PC-3 (cell line): ENCODE measurements at regions of chr3 and their contacts with region 1.

Region 1: DNA sequence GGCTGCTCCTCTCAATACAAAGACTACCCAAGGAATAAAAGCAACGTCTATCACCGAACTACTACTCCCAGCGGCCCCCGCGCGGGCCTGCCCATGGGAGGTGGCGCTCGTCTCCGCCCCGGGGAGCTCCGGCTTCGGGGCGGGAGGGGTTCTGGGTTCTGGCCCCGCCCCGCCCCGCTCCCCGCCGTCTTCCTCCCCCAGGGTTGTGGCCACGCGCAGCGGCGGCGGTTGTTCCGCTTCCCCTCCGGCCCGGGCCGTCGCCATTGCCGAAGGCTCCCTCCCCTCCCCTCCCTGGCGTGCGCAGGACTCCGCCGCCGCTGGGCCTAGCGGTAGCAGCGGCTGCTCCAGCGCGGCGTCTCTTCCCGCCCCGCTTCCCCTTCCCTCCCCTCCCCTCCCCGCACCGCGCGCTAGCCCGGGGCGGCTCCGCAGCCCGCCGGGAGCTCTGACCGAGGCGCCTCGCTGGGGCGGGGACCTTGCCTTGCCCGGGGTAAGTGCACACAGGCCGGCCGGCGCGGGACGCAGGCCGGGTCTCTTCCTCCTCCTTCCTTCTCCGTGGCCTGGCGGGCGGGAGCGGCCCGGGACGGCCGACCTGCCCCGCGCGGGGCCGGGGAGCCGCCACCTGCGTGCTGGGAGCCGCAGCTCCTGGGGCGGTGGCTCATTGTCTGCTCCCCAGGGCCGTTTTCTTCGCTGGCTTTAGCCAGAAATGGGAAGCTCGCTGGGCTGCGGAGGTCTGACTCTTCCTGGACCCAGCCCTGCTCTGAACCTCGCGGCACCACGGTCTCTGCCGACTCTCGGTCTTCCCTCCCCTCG is at the start of gene PAK2:
- DNase-seq: peak; percentile 91
- ATAC-seq: peak; percentile 86
- H3K4me3 ChIP-seq: peak within 1 kb of the TSS; percentile 99
- H3K27ac ChIP-seq: peak within 1 kb of the TSS; percentile 78
- H3K4me1 ChIP-seq: peaks cover 18% of the 10 kb centered on the region
- H3K27me3 ChIP-seq: no peaks in the 10 kb centered on the region
- CTCF ChIP-seq: no peak
- total RNA-seq, gene PAK2: 32.6 and 53.8 TPM in 2 replicates

Region 2: DNA sequence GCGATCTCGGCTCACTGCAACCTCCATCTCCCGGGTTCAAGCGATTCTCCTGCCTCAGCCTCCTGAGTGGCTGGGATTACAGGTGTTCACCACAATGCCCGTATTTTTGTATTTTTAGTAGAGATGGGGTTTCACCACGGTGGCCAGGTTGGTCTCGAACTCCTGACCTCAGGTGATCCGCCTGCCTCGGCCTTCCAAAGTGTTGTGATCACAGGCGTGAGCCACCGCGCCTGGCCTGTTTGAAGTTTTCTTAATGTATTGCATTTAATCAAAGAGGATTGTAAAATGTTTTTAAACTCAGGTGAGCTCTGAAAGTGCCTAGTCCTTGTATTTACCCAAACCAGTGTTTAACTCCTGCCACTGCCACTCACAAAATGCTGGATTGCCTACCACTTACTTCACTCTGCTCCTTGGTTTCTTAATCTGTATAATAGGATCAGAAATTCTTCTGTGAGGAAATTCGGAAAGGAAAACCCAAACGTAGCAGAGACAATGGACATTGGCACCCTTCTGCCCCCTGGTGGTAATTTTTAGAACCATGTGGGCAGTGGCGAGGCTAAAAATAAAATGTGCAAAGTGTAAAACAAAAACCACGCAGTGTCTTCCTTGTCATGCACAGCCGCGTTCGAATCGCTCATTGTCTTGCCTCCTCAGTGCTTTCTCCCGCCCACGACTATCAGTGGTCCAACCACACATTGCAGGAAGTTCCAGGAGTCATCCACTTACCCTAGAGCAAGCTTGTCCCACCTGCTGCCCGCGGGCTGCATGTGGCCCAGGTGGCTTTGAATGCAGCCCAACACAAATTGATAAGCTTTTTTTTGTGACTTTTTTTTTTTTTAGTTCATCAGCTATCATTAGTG is 55.1 kb before region 1 on chr3:
- CTCF ChIA-PET with region 1: interaction called, 11 read pairs
- POLR2A ChIA-PET with region 1: no interaction called
- intact Hi-C with region 1: no loop called
- DNase-seq: peak; percentile 80
- ATAC-seq: peak; percentile 88
- H3K4me3 ChIP-seq: 0 out of 2 replicates have a peak overlapping the region, but pooled peaks have one; percentile 21
- H3K27ac ChIP-seq: no peak overlapping the region
- H3K4me1 ChIP-seq: no peaks in the 10 kb centered on the region
- H3K27me3 ChIP-seq: 0 out of 2 replicates have a peak, but pooled peaks cover 3% of the 10 kb centered on the region
- CTCF ChIP-seq: peak; percentile 88

Region 3: DNA sequence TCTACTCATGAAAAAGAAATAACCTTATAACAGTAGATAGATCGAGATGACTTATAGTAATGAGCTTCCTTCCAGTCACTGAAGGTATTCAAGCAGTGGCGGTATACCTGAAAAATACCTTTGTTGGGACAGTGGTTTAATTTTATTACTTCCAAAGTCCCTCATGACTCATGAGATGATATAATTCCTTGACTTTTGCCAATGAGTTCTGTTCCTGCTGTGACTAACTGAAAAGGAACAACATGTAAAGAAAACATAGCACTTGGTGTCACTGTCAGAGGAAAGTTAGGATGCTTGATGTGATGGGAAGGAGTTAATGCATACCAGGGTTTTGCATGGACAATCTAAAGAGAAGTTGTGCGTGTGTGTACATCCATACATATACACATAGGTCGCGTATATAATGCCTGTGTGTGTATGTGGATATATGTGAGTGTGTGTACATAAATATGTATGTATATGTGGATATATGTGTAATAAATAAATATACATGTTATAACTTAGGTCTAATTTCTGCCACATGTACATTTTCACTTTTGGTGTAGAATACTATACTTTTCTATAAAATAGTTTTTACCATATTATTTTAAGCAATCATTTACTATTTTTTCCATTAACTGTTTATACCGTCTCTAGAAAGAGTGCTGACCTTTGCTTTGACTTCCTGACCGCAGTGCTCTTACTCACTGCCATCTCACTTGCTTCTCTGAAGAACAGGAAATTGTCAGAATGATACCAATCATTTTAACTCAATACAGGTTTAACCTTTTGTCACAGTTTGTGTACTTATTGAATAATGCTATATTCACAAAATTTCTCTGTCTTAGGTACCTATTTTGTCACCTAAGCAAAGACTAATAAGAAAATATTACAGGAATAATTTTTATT is 12.8 kb before region 1 on chr3:
- CTCF ChIA-PET with region 1: no interaction called
- POLR2A ChIA-PET with region 1: no interaction called
- intact Hi-C with region 1: loop called (anchors 2 kb)
- DNase-seq: peak; percentile 96
- ATAC-seq: peak; percentile 93
- H3K4me3 ChIP-seq: peak overlapping the region; percentile 13; the same call in 1 of the 2 replicates
- H3K27ac ChIP-seq: peak overlapping the region; percentile 76
- H3K4me1 ChIP-seq: peaks cover 35% of the 10 kb centered on the region
- H3K27me3 ChIP-seq: no peaks in the 10 kb centered on the region
- CTCF ChIP-seq: no peak

Region 4: DNA sequence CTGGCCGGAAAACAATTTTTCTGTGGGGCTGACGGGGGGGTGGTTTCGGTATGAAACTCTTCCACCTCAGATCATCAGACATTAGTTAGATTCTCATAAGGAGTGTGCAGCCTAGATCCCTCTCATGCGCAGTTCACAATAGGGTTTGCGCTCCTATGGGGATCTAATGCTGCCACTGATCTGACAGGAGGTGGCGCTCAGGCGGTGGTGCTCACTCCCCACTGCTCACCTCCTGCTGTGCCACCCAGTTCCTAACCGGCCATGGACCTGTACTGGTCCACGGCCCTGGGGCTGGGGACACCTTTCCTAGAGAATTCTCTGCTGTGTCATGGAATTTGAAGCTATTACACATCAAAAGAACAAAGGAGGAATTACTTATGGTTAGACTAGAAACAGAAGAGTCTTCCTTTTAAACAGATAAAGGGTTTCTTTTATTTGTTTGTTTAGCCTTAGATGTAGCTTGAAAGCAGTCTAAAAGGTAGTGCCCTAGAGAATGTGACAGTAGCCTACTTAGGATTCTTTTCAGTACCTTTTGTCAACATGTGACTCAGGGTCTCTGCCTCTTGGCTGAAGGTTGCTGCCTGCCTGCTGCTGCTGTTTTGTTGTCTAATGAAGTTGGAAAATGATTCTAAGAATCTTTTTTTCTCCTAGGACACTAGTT is 50.0 kb after region 1 on chr3:
- CTCF ChIA-PET with region 1: no interaction called
- POLR2A ChIA-PET with region 1: no interaction called
- intact Hi-C with region 1: loop called (anchors 1 kb)
- DNase-seq: peak; percentile 77
- ATAC-seq: peak; percentile 58
- H3K4me3 ChIP-seq: no peak overlapping the region
- H3K27ac ChIP-seq: peak overlapping the region; percentile 39
- H3K4me1 ChIP-seq: peaks cover 57% of the 10 kb centered on the region
- H3K27me3 ChIP-seq: no peaks in the 10 kb centered on the region
- CTCF ChIP-seq: peak; percentile 53

Region 5: DNA sequence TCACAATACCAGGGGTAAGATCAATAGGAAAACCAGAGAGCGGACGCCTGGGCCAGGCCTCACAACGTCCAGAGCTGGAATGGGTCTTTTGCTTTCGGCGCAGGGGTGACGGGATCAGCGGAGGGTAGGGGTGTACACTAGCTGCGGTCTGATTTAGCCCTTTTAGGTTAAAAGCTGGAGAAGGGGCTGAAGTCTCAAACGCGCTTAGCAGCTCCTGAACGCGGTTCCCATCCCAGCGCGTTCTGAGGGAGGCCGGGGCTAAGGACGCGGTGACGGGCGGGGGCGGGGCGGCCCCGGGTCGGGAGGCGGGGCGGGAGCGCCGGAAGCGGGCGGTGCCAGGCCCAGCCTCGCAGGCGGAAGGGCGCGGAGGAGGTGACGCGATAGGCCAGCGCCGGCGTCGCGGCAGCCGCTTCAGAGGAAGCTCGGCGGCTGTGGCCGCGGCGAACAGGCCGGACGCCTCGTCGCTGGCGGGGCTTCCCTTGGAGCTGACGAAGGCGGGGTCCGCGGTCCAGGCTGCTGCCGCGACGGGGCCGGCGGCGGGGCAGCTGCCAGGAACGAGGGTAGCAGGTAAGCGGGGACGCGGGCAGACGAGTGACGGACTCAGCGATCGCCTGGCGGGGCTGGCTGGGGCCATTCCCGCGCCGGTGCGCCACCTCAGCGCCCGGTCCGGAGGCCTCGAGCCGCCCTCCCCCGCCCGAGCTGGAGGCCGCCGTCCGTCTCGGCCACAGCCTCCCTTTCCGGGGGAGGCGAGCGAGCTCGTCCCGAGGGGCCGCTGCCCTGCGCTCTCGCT is 127.8 kb after region 1 on chr3 and contains the start of gene SENP5:
- CTCF ChIA-PET with region 1: no interaction called
- POLR2A ChIA-PET with region 1: interaction called, 15 read pairs
- intact Hi-C with region 1: no loop called
- DNase-seq: peak; percentile 91
- ATAC-seq: peak; percentile 95
- H3K4me3 ChIP-seq: peak within 1 kb of the TSS; percentile 97
- H3K27ac ChIP-seq: 0 out of 2 replicates have a peak within 1 kb of the TSS, but pooled peaks have one; percentile 24
- H3K4me1 ChIP-seq: peaks cover 10% of the 10 kb centered on the region
- H3K27me3 ChIP-seq: no peaks in the 10 kb centered on the region
- CTCF ChIP-seq: no peak
- total RNA-seq, gene SENP5: 31.4 and 34.2 TPM in 2 replicates

Region 6: GRCh38 chr3:197959898-197960693 is 1220.2 kb after region 1 on chr3 and contains the start of gene LMLN:
- CTCF ChIA-PET with region 1: no interaction called
- POLR2A ChIA-PET with region 1: interaction called, 16 read pairs
- intact Hi-C with region 1: no loop called
- DNase-seq: peak; percentile 96
- ATAC-seq: peak; percentile 87
- H3K4me3 ChIP-seq: peak within 1 kb of the TSS; percentile 91
- H3K27ac ChIP-seq: peak within 1 kb of the TSS; percentile 68
- H3K4me1 ChIP-seq: peaks cover 22% of the 10 kb centered on the region
- H3K27me3 ChIP-seq: no peaks in the 10 kb centered on the region
- CTCF ChIP-seq: no peak
- total RNA-seq, gene LMLN: 3.7 and 7.5 TPM in 2 replicates